IMR-90 (cell line): ENCODE measurements at regions of chrX and their contacts with region 1.

Region 1: GRCh38 chrX:112642349-112642748 is 37.4 kb downstream of the LHFPL1 start:
- DNase-seq: peak; percentile 75
- ATAC-seq: peak; percentile 89
- H3K4me3 ChIP-seq: no peak overlapping the region
- H3K27ac ChIP-seq: no peak overlapping the region
- H3K4me1 ChIP-seq: peaks cover 4% of the 10 kb centered on the region; the same call in 1 of the 2 replicates
- H3K27me3 ChIP-seq: no peaks in the 10 kb centered on the region; the same call in 1 of the 2 replicates
- CTCF ChIP-seq: peak; percentile 83
- POLR2A ChIP-seq: no peak
- RAD21 ChIP-seq: peak; percentile 87

Region 2: DNA sequence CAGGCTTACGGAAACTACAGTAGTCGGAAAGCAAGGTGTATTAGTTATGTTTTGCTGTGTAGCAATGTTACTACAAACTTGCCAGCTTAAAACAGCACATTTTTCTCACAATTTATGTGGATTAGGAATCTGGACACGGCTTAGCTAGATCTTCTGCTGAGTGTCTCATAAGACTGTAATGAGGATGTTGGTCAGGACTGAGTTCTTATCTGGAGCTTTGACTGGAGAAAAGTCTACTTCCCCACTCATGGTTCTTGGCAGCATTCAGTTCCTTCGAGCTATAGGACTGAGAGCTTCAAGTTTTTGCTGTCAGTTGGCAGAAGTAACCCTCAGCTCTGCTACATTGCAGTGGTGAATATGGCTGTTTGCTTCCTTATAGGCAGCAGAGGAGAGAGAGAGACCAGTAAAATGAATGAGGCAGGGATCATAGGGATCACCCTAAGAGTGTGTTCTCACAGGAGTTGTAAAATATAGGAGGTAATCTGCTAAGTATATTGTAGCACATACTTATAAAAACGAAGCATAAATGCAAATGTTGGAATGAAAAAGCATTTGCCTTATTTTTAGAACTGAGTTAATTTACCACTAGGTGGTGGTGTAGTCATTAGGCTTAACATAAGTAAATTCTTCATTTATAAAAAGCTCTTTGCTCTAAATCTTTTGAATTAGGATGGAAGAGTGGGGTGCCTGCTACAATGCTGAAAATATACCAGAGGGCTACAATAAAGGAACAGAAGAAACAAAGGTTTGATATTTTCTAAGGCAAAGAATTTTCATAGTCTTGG is 922.7 kb before region 1 on chrX:
- CTCF ChIA-PET with region 1: interaction called, 3 read pairs
- POLR2A ChIA-PET with region 1: no interaction called
- dilution Hi-C with region 1: no loop called
- in situ Hi-C with region 1: loop called (anchors 25 kb)
- intact Hi-C with region 1: loop called (anchors 5 kb)
- DNase-seq: peak; percentile 16
- ATAC-seq: peak; percentile 35
- H3K4me3 ChIP-seq: no peak overlapping the region
- H3K27ac ChIP-seq: no peak overlapping the region
- H3K4me1 ChIP-seq: 0 out of 2 replicates have a peak, but pooled peaks cover 2% of the 10 kb centered on the region
- H3K27me3 ChIP-seq: no peaks in the 10 kb centered on the region
- CTCF ChIP-seq: peak; percentile 32
- POLR2A ChIP-seq: no peak
- RAD21 ChIP-seq: peak; percentile 34; the same call in 1 of the 2 replicates

Region 3: DNA sequence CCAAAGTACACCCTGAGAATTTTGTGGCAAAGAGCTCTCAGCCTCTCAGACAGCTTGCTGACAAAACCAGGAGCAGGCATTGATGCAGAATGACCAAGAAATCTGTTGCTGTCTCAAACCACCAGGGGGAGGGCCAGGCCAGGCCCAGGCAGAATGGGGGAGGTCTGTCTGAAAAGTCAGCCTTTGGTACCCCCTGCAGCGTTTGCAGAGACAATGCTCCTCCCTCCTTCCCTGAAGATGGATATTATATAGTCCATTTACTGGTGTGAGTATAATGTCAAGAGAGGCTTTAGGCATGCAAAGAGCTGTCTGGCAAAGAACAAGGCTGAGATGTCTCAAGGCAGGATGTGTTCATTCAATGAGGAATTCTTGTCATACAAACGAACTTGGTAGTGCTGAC is 819.2 kb before region 1 on chrX:
- CTCF ChIA-PET with region 1: no interaction called
- POLR2A ChIA-PET with region 1: no interaction called
- dilution Hi-C with region 1: no loop called
- in situ Hi-C with region 1: no loop called
- intact Hi-C with region 1: loop called (anchors 1 kb)
- DNase-seq: peak; percentile 25
- ATAC-seq: peak; percentile 70
- H3K4me3 ChIP-seq: no peak overlapping the region
- H3K27ac ChIP-seq: no peak overlapping the region
- H3K4me1 ChIP-seq: no peaks in the 10 kb centered on the region
- H3K27me3 ChIP-seq: peaks cover 5% of the 10 kb centered on the region
- CTCF ChIP-seq: peak; percentile 49
- POLR2A ChIP-seq: no peak
- RAD21 ChIP-seq: peak; percentile 57

Region 4: DNA sequence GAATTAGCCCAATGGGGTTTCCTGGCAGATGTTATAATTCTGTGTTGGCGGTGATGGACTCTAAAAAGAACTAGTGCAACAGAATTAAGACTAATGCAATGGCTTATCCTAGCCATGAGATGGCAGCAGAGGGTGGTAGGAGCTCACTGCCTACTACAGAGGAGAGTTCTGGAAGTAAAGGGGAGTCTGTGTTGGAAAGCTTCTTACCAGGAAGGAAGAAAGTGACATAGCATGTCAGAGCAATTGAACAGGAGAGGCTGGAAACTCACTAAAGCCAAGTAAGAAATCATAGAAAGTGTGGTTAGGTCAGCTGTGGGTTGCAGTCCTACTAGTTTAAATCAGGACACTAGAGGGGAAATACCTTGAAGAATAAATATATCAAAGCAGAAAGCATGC is 772.7 kb before region 1 on chrX:
- CTCF ChIA-PET with region 1: no interaction called
- POLR2A ChIA-PET with region 1: no interaction called
- dilution Hi-C with region 1: no loop called
- in situ Hi-C with region 1: loop called (anchors 10 kb)
- intact Hi-C with region 1: loop called (anchors 1 kb)
- DNase-seq: peak; percentile 63
- ATAC-seq: peak; percentile 95
- H3K4me3 ChIP-seq: no peak overlapping the region
- H3K27ac ChIP-seq: no peak overlapping the region
- H3K4me1 ChIP-seq: no peaks in the 10 kb centered on the region
- H3K27me3 ChIP-seq: peaks cover 5% of the 10 kb centered on the region
- CTCF ChIP-seq: peak; percentile 71
- POLR2A ChIP-seq: no peak
- RAD21 ChIP-seq: peak; percentile 76

Region 5: DNA sequence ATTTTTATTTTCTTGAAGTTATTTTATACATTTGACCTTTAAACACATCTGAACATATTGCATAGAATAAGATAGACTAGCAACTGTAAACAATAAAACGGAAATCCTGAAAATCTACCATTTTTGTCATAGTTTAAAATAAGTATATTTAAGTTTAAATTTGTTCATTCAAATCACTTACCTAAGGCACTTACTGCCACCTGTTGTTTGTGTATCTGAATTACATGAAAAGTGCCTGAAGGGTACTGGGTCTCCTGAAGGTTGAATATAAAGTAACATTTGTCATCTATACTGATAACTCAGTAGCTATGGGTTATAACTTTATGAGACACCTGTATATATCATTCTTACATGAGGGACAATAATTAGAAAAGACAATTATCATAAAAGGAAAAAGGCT is 598.4 kb before region 1 on chrX:
- CTCF ChIA-PET with region 1: interaction called, 3 read pairs
- POLR2A ChIA-PET with region 1: no interaction called
- dilution Hi-C with region 1: no loop called
- in situ Hi-C with region 1: no loop called
- intact Hi-C with region 1: loop called (anchors 2 kb)
- DNase-seq: peak; percentile 15
- ATAC-seq: no peak
- H3K4me3 ChIP-seq: no peak overlapping the region
- H3K27ac ChIP-seq: no peak overlapping the region
- H3K4me1 ChIP-seq: no peaks in the 10 kb centered on the region
- H3K27me3 ChIP-seq: peaks cover 5% of the 10 kb centered on the region
- CTCF ChIP-seq: peak; percentile 39; the same call in 1 of the 2 replicates
- POLR2A ChIP-seq: no peak
- RAD21 ChIP-seq: no peak

Region 6: GRCh38 chrX:112513154-112513553 is 129.2 kb before region 1 on chrX:
- CTCF ChIA-PET with region 1: no interaction called
- POLR2A ChIA-PET with region 1: no interaction called
- dilution Hi-C with region 1: no loop called
- in situ Hi-C with region 1: no loop called
- intact Hi-C with region 1: loop called (anchors 1 kb)
- DNase-seq: peak; percentile 78
- ATAC-seq: peak; percentile 83
- H3K4me3 ChIP-seq: no peak overlapping the region
- H3K27ac ChIP-seq: no peak overlapping the region
- H3K4me1 ChIP-seq: no peaks in the 10 kb centered on the region
- H3K27me3 ChIP-seq: no peaks in the 10 kb centered on the region
- CTCF ChIP-seq: no peak
- POLR2A ChIP-seq: no peak
- RAD21 ChIP-seq: no peak

Region 7: GRCh38 chrX:112668476-112669409 is 26.4 kb after region 1 on chrX:
- CTCF ChIA-PET with region 1: no interaction called
- POLR2A ChIA-PET with region 1: no interaction called
- dilution Hi-C with region 1: no loop called
- in situ Hi-C with region 1: no loop called
- intact Hi-C with region 1: no loop called
- DNase-seq: no peak
- ATAC-seq: no peak
- H3K4me3 ChIP-seq: no peak overlapping the region
- H3K27ac ChIP-seq: no peak overlapping the region
- H3K4me1 ChIP-seq: no peaks in the 10 kb centered on the region
- H3K27me3 ChIP-seq: peaks cover 8% of the 10 kb centered on the region
- CTCF ChIP-seq: no peak
- POLR2A ChIP-seq: no peak
- RAD21 ChIP-seq: no peak

Region 8: DNA sequence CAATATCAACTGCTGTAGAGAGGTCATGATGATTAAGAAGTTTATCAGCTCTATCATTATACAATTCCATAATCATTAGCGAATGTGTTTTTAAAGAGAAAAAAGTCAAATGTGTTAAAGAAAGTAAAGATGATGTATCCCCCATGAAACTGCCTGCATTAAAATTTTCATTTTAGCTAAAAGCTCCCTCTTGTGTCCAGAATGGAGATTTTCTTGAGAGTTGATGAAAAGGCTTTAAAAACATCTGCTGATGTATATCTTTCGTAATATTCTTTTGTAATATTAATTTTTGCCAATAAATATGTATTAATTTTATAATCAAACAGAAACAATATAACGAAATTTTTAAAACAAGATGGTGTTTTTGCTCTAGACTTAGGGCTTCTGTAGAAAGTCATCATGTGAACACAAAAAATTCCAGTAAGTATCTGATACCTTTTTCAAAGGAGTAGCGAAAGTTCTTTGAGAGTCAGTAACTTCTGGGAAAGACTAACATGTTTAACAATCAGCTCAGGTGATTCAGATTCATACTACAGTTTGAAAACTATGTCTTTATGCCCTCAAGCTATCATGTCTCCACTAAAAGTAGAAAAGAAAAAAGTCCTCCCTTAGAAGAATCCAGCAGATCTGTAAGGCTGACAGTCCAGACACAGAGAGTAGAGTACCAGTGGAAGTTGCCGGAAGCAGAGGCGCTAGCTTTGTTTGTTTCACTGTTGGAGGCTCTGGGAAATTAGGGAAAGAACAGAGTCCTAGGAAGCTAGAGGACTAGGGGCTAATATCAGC is 89.6 kb after region 1 on chrX:
- CTCF ChIA-PET with region 1: no interaction called
- POLR2A ChIA-PET with region 1: no interaction called
- dilution Hi-C with region 1: no loop called
- in situ Hi-C with region 1: no loop called
- intact Hi-C with region 1: loop called (anchors 5 kb)
- DNase-seq: peak; percentile 32
- ATAC-seq: no peak
- H3K4me3 ChIP-seq: no peak overlapping the region
- H3K27ac ChIP-seq: no peak overlapping the region
- H3K4me1 ChIP-seq: no peaks in the 10 kb centered on the region
- H3K27me3 ChIP-seq: no peaks in the 10 kb centered on the region; the same call in none of the 2 replicates
- CTCF ChIP-seq: peak; percentile 49
- POLR2A ChIP-seq: no peak
- RAD21 ChIP-seq: peak; percentile 43